A673 (cell line): ENCODE measurements at regions of chr4 and their contacts with region 1.

Region 1: GRCh38 chr4:155787113-155787710 is 28.4 kb downstream of the GUCY1B1 start:
- DNase-seq: peak; percentile 66
- H3K4me3 ChIP-seq: no peak overlapping the region
- H3K27ac ChIP-seq: no peak overlapping the region
- H3K4me1 ChIP-seq: no peaks in the 10 kb centered on the region
- H3K27me3 ChIP-seq: no peaks in the 10 kb centered on the region
- CTCF ChIP-seq: peak; percentile 79

Region 2: GRCh38 chr4:154807042-154807630 is 980.1 kb before region 1 on chr4:
- CTCF ChIA-PET with region 1: no interaction called
- POLR2A ChIA-PET with region 1: no interaction called
- intact Hi-C with region 1: loop called (anchors 2 kb)
- DNase-seq: peak; percentile 51
- H3K4me3 ChIP-seq: no peak overlapping the region
- H3K27ac ChIP-seq: no peak overlapping the region
- H3K4me1 ChIP-seq: no peaks in the 10 kb centered on the region
- H3K27me3 ChIP-seq: no peaks in the 10 kb centered on the region
- CTCF ChIP-seq: peak; percentile 87

Region 3: DNA sequence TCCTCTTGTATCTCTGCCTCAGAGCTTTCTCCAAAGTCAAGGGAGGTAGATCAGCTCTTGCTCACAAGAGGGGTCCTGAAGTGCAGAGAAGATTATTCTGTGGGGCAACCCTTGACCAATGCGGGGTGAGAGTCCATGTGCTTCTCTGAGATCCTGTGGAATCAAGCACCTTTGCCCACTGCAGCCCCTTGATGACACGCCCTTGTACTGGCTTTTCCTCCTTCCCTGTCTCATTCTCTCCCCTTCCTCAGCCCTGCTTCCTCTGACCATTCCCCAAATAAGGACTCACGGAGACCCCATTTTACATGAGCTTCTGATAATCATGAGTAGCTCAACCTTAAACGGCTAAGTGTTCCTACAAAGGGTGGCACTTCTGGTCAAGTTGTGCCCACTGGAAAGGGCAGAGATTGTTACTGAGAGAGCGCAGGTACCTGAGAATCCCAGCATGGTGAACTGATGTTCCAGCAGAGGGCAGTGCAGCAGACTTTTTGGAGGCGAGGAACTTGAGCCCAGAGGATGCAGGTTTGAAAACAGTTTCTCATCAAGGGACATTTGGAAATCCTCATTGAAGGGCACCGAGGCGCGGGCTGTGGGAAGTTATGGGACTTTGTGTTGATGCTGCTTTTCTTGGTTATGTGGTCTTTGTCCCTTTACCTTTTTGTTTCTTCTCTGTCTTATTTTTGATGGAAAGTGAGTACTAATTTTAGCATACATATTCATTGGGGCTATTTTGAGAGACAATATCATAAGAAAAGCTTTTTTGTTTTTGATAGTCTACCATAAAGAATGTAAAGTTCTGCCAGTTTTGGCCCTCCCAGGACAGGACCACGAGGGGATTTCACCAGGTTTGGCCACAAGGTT is 804.8 kb before region 1 on chr4:
- CTCF ChIA-PET with region 1: no interaction called
- POLR2A ChIA-PET with region 1: no interaction called
- intact Hi-C with region 1: loop called (anchors 10 kb)
- DNase-seq: peak; percentile 66
- H3K4me3 ChIP-seq: no peak overlapping the region
- H3K27ac ChIP-seq: no peak overlapping the region
- H3K4me1 ChIP-seq: no peaks in the 10 kb centered on the region
- H3K27me3 ChIP-seq: no peaks in the 10 kb centered on the region
- CTCF ChIP-seq: peak; percentile 81

Region 4: DNA sequence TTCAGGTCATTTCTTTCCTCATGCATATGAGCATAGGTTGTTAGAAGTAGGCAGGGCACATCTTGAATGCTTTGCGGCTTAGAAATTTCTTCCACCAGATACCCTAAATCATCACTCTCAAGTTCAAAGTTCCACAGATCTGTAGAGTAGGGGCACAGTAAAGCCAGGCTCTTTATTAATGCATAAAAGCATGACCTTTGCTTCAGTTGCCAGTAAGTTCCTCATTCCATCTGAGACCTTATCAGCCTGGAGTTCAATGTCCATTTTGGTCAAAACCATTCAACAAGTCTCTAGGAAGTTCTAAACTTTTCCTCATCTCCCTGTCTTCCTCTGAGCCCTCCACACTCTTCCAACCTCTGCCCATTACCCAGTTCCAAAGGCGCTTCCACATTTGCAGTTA is 488.1 kb before region 1 on chr4:
- CTCF ChIA-PET with region 1: no interaction called
- POLR2A ChIA-PET with region 1: no interaction called
- intact Hi-C with region 1: no loop called
- DNase-seq: no peak
- H3K4me3 ChIP-seq: no peak overlapping the region
- H3K27ac ChIP-seq: no peak overlapping the region
- H3K4me1 ChIP-seq: no peaks in the 10 kb centered on the region
- H3K27me3 ChIP-seq: no peaks in the 10 kb centered on the region
- CTCF ChIP-seq: no peak

Region 5: DNA sequence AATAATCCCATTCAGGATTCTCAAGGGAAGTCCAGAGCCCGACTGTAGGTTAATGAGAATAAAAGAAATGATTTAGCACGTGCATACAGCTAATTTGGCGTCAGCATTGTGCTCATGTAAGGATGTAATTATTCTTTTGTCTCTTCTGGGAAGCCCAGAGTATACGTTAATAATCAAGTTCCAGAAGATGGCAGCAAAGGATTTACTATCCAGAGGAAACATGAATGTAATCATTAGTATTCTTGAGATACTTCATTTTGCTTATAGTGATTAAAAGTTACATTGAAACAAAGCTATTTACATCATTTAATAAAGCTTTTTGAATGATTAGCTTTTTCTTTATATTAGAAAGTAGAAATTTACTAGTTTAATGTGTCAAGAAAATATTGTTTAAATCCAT is 383.3 kb before region 1 on chr4:
- CTCF ChIA-PET with region 1: no interaction called
- POLR2A ChIA-PET with region 1: no interaction called
- intact Hi-C with region 1: loop called (anchors 1 kb)
- DNase-seq: peak; percentile 64
- H3K4me3 ChIP-seq: no peak overlapping the region
- H3K27ac ChIP-seq: no peak overlapping the region
- H3K4me1 ChIP-seq: no peaks in the 10 kb centered on the region
- H3K27me3 ChIP-seq: no peaks in the 10 kb centered on the region
- CTCF ChIP-seq: peak; percentile 50

Region 6: DNA sequence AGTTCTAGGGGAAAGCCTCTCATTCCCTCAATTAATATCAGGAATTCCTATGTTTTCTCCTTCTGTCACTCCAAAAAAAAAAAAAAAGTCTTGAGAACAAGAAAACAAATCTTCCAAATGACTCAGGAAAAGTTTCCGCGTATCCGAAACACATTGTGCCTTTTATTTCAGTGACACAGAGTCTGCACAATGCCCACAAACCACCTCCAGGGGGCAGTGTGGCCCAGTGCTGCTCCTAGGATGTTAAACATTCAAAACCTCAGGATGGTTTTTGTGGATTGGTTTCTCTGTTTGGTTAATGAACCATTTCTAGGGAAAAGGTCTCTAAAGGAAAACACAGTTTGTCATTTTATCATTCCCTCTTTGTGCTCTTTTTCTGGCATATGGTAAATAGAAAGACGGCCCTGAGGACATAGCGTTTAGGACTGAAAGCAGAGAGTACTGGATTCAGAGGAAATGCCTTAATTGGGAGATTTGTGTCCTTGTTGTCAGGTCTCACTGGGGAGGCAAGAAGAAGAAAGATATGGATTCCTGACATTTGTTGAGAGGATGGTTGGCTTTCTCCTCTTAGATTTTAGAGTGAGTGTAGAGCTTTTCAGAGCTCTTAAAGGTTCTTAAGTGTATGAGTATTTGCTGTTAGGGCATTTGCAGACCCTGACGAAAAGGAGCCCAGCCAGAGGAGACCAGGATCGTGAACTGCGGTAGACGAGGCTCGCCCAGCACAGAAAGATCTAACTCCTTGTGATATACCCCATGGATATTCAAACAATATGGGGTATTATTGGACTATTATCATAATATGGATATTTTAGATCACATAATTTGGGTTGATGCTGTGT is 344.7 kb before region 1 on chr4:
- CTCF ChIA-PET with region 1: interaction called, 3 read pairs
- POLR2A ChIA-PET with region 1: no interaction called
- intact Hi-C with region 1: loop called (anchors 1 kb)
- DNase-seq: peak; percentile 70
- H3K4me3 ChIP-seq: no peak overlapping the region
- H3K27ac ChIP-seq: no peak overlapping the region
- H3K4me1 ChIP-seq: no peaks in the 10 kb centered on the region
- H3K27me3 ChIP-seq: no peaks in the 10 kb centered on the region
- CTCF ChIP-seq: peak; percentile 98

Region 7: GRCh38 chr4:155529272-155529671 is 257.9 kb before region 1 on chr4:
- CTCF ChIA-PET with region 1: interaction called, 8 read pairs
- POLR2A ChIA-PET with region 1: no interaction called
- intact Hi-C with region 1: loop called (anchors 2 kb)
- DNase-seq: peak; percentile 23
- H3K4me3 ChIP-seq: no peak overlapping the region
- H3K27ac ChIP-seq: no peak overlapping the region
- H3K4me1 ChIP-seq: no peaks in the 10 kb centered on the region
- H3K27me3 ChIP-seq: no peaks in the 10 kb centered on the region
- CTCF ChIP-seq: peak; percentile 50; the same call in 1 of the 2 replicates